ENCODE measurements at regions of chr21 and their contacts with region 1.

Region 1: GRCh38 chr21:42097860-42098454 is 26.8 kb downstream of the UMODL1 start:
- DNase-seq: peak in 1 of 2 donors; percentile 32
- ATAC-seq: peak; percentile 46 to 86 (median 69)
- H3K4me3 ChIP-seq: no peak overlapping the region
- H3K27ac ChIP-seq: peak overlapping the region in 4 of 10 donors; percentile 1 to 55 (median 47)
- H3K4me1 ChIP-seq: peaks cover 0 to 36% (median 9%) of the 10 kb centered on the region in 9 donors
- H3K27me3 ChIP-seq: peaks cover 0 to 10% (median 6%) of the 10 kb centered on the region in 7 donors
- CTCF ChIP-seq: no peak

Region 2: GRCh38 chr21:41847066-41847804 is 250.7 kb before region 1 on chr21:
- intact Hi-C with region 1: no loop called
- DNase-seq: no peak
- ATAC-seq: no peak
- H3K4me3 ChIP-seq: no peak overlapping the region
- H3K27ac ChIP-seq: no peak overlapping the region
- H3K4me1 ChIP-seq: no peaks in the 10 kb centered on the region
- H3K27me3 ChIP-seq: no peaks in the 10 kb centered on the region
- CTCF ChIP-seq: no peak

Region 3: GRCh38 chr21:42027822-42028765 is 69.9 kb before region 1 on chr21:
- intact Hi-C with region 1: loop called in 1 of 10 experiments (anchors 5 kb)
- DNase-seq: no peak
- ATAC-seq: peak in 3 of 8 donors; percentile 23 to 40 (median 25)
- H3K4me3 ChIP-seq: no peak overlapping the region
- H3K27ac ChIP-seq: peak overlapping the region in 3 of 10 donors; percentile 22 to 50 (median 36)
- H3K4me1 ChIP-seq: peaks cover 0 to 26% (median 0%) of the 10 kb centered on the region in 9 donors
- H3K27me3 ChIP-seq: no peaks in the 10 kb centered on the region
- CTCF ChIP-seq: no peak

Region 4: GRCh38 chr21:42047821-42048613 is 49.9 kb before region 1 on chr21:
- intact Hi-C with region 1: loop called in 1 of 10 experiments (anchors 10 kb)
- DNase-seq: peak in 1 of 2 donors; percentile 56
- ATAC-seq: peak; percentile 59 to 92 (median 86)
- H3K4me3 ChIP-seq: no peak overlapping the region
- H3K27ac ChIP-seq: peak overlapping the region in 4 of 10 donors; percentile 30 to 61 (median 40)
- H3K4me1 ChIP-seq: peaks cover 0 to 16% (median 4%) of the 10 kb centered on the region in 9 donors
- H3K27me3 ChIP-seq: no peaks in the 10 kb centered on the region
- CTCF ChIP-seq: no peak

Region 5: DNA sequence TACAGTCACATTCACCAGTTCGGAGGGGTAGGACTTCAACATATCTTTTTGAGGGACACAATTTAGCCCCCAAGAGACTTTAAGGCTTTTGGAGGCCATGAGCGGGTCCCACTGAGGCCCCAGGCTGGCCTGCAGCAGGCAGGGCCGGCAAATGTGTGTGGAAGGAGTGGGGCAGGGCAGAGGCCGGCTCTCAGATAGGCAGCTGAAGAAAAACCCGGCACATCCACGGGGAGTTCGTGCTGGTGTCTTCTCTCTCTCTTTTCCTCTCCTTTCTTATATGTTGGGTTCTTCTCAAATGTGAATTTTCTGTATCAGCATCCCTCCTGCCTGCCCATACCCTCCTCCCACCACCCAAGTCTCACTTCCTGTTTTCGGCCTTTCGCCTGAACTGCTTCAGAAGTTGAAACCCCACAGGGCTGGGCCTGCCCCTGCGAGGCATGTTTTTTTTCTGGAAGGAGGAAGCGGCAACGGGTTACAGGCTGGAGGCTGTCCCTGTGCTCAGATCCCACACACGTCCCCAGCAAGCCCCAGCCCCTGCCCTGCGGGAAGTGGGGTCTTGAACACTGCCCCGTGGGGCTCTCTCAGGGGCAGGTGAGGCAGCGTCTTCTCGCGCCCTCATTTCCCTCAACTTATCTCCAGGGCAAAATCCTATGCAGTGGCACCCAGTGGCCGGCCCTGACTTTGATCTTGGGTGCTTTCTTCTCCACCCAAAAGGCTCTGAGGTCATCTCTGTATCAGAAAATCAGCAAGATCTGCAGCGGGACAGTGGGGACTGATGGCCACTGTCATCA is 36.6 kb before region 1 on chr21:
- intact Hi-C with region 1: no loop called
- DNase-seq: peak; percentile 39 to 57
- ATAC-seq: peak in 7 of 8 donors; percentile 36 to 66 (median 55)
- H3K4me3 ChIP-seq: peak overlapping the region in 1 of 10 donors; percentile 35
- H3K27ac ChIP-seq: peak overlapping the region in 2 of 10 donors; percentile 9 to 57
- H3K4me1 ChIP-seq: peaks cover 0 to 48% (median 3%) of the 10 kb centered on the region in 9 donors
- H3K27me3 ChIP-seq: peaks cover 0 to 53% (median 22%) of the 10 kb centered on the region in 7 donors
- CTCF ChIP-seq: no peak

Region 6: DNA sequence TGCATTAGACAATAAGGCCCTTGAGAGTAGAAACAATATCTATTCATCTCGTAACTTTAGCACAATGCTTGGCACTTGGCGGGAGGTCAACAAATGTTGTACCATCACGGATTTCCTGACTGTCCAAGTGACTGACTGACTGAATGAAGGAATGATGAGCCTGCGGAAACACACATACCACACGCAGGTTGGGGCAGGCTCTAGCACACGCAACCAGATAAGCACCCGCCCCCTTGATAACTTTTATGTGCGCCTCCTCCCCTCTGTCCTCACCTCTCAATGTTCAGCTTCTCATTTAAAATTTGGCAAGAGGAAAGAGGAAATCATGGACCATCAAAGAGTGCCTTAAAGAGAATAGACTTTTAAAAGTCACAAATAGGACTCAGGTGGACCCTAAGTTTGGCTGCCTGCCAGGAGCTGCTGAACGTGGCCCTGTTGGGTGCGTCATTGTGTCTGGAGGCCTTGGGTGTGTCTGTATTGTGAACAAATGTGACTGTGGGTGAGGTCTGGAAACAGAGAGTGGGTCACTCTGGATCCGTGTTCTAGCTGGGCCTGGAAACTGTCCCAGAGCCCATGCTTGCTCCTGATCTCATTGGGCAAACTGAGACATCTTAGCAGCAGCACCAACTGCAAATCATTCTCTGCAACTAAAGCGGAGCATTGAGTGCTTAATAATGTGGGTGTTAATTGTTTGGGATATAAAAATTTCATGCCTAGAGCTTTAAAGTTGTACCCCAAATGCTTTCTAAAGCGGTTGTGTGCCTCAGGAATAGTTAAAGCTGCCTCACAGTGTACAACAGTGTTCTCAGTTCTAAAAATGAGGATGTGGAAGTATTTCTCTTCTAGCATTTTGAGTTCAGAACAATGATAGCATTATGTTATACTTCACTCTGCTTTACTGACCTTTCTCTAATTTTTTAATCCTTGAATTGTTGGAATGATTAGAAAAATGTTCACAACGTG is 73.4 kb after region 1 on chr21:
- intact Hi-C with region 1: no loop called
- DNase-seq: peak; percentile 47 to 68
- ATAC-seq: peak; percentile 55 to 93 (median 84)
- H3K4me3 ChIP-seq: no peak overlapping the region
- H3K27ac ChIP-seq: peak overlapping the region in 7 of 10 donors; percentile 2 to 52 (median 30)
- H3K4me1 ChIP-seq: peaks cover 0 to 19% (median 0%) of the 10 kb centered on the region in 9 donors
- H3K27me3 ChIP-seq: no peaks in the 10 kb centered on the region
- CTCF ChIP-seq: no peak

Region 7: DNA sequence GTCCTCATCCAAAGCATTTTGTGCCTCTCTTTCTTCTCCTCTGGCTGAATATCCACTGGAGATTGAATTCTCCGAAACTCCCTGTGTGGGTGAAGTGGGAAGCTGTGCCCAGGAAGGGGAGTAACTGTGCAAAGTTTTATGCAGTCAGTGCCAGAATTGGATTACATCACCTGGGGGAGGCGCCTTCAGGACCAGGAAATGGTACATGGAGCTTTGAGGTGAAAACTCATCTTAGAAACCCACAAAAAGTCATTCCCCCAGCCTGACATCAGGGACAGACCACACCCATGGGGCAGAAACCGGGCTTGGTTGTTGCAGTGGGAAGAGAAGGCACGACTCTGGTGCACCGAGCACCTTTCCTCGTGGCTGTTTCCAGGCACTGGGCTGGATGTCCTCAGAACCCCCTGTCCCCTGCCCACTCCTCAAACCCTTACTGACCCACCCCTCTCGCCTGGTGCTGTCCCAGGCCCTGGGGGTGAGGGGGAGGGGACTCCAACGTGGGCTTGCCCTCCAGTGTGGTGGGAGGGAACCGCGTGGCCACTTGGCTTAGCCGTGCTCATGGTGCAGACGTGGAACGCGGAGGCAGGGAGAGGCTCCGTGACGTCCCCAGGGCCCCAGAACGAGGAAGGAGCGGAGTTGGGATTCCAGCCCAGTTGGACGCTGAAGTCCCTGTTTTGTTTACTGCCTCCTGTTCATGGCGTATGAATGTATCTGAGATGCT is 201.5 kb after region 1 on chr21:
- intact Hi-C with region 1: no loop called
- DNase-seq: peak in 1 of 2 donors; percentile 41
- ATAC-seq: peak; percentile 38 to 71 (median 58)
- H3K4me3 ChIP-seq: no peak overlapping the region
- H3K27ac ChIP-seq: peak overlapping the region; percentile 3 to 67 (median 47)
- H3K4me1 ChIP-seq: peaks cover 10 to 54% (median 32%) of the 10 kb centered on the region in 9 donors
- H3K27me3 ChIP-seq: no peaks in the 10 kb centered on the region
- CTCF ChIP-seq: no peak